Mammary epithelial cell (primary cell): ENCODE measurements at regions of chr12 and their contacts with region 1.

Region 1: DNA sequence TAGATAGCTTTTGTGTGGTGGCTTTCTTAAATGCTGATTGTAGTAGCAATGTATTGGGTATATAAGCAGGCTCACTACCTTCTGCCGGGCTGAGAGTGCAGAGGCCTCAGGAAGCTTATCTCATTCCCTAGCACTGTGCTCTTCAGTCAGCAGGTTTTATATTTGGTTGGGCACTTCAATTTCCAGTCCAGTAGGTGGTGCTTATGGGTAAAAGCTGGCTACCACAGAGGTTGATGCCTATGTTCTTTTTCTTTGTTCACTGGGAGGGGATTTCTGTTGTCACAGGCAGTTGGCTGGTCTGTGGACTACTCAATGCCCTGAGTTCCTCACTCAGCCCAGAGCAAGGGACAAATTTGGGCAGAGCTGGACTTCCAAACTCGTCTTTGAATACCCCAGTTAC is 43.0 kb upstream of the GLIPR1 start:
- DNase-seq: peak; percentile 53
- H3K4me3 ChIP-seq: no peak overlapping the region
- H3K27ac ChIP-seq: no peak overlapping the region
- H3K4me1 ChIP-seq: peaks cover 19% of the 10 kb centered on the region
- H3K27me3 ChIP-seq: no peaks in the 10 kb centered on the region
- CTCF ChIP-seq: peak; percentile 30 to 52

Region 2: GRCh38 chr12:75511116-75512048 is 73.8 kb after region 1 on chr12 and contains the start of gene KRR1:
- CTCF ChIA-PET with region 1: no interaction called
- dilution Hi-C with region 1: no loop called
- in situ Hi-C with region 1: no loop called
- intact Hi-C with region 1: no loop called
- DNase-seq: peak; percentile 98
- H3K4me3 ChIP-seq: peak within 1 kb of the TSS; percentile 60 to 84 (median 79)
- H3K27ac ChIP-seq: peak within 1 kb of the TSS; percentile 93
- H3K4me1 ChIP-seq: peaks cover 19% of the 10 kb centered on the region
- H3K27me3 ChIP-seq: no peaks in the 10 kb centered on the region
- CTCF ChIP-seq: no peak
- total RNA-seq, gene KRR1: 36.7 to 99.1 TPM

Region 3: GRCh38 chr12:76037130-76038103 is 599.9 kb after region 1 on chr12:
- CTCF ChIA-PET with region 1: interaction called, 21 read pairs
- dilution Hi-C with region 1: no loop called
- in situ Hi-C with region 1: no loop called
- intact Hi-C with region 1: no loop called
- DNase-seq: peak; percentile 70
- H3K4me3 ChIP-seq: no peak overlapping the region
- H3K27ac ChIP-seq: no peak overlapping the region
- H3K4me1 ChIP-seq: peaks cover 5% of the 10 kb centered on the region
- H3K27me3 ChIP-seq: no peaks in the 10 kb centered on the region
- CTCF ChIP-seq: peak; percentile 73 to 83